ENCODE measurements at regions of chr1 and their contacts with region 1.

Region 1: DNA sequence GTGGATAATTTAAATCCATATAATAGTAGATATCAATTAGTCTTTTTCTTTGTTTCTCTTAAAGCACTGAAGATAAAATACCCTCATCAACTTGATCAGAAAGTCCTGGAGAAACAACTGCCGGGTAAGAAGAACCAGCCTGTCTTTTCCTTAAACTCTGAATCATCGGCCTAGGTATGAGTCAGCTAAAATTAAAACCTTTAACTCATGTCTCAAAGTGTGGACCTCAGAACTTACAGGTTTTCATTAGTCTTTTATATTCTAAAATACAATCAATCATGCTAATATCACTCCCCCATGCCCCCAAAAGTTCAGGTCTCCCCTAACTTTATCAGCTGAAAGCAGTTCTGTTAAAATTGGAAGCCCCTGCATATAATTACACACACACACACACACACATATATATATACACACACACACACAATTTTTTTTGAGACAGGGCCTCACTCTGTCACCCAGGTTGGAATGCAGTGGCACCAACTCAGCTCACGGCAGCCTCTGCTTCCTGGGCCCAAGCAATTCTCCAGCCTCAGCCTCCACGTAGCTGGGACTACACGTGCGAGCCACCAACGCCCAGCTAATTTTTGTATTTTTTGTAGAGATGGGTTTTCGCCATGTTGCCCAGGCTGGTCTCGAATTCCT is 61.3 kb downstream of the B3GALNT2 start:
- DNase-seq: no peak
- ATAC-seq: no peak
- H3K4me3 ChIP-seq: no peak overlapping the region
- H3K27ac ChIP-seq: peak overlapping the region; percentile 40; the same call in 1 of the 2 replicates
- H3K4me1 ChIP-seq: no peaks in the 10 kb centered on the region
- H3K27me3 ChIP-seq: no peaks in the 10 kb centered on the region
- CTCF ChIP-seq: no peak

Region 2: GRCh38 chr1:235357485-235358378 is 85.2 kb before region 1 on chr1:
- CTCF ChIA-PET with region 1: no interaction called
- POLR2A ChIA-PET with region 1: no interaction called
- in situ Hi-C with region 1: no loop called
- intact Hi-C with region 1: no loop called
- DNase-seq: no peak
- ATAC-seq: peak; percentile 33; the same call in 1 of the 2 replicates
- H3K4me3 ChIP-seq: no peak overlapping the region
- H3K27ac ChIP-seq: peak overlapping the region; percentile 36; the same call in 1 of the 2 replicates
- H3K4me1 ChIP-seq: peaks cover 4% of the 10 kb centered on the region; the same call in 1 of the 2 replicates
- H3K27me3 ChIP-seq: no peaks in the 10 kb centered on the region
- CTCF ChIP-seq: no peak

Region 3: DNA sequence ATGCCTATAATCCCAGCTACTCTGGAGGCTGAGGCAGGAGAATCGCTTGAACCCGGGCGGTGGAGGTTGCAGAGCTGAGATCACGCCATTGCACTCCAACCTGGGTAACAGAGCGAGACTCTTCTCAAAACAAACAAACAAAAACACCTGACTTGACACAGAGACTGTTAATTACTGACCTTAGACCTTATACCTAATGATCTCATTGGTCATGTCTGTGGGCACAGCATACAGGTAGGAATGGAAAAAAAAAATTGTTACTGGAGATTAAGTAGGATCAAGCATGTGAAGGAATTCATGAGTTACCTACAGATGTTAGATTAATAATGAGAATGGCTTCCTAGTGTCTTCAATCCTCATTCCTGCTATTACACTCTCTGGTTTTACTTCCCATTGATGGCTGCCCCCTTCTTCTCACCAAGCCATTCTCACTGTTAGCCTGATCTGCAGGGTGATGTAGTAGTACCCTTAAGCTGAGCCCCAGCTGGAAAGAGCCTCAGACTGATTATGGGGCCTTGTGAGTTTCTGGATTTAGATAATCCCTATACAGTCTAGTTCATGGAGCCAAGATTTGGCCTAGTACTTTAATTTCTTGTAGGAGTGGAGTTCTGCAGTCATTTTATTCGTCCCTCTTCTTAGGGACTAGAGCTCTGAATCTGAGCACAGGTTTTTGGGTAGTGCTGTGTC is 66.8 kb before region 1 on chr1:
- CTCF ChIA-PET with region 1: no interaction called
- POLR2A ChIA-PET with region 1: interaction called, 13 read pairs
- in situ Hi-C with region 1: no loop called
- intact Hi-C with region 1: no loop called
- DNase-seq: no peak
- ATAC-seq: no peak
- H3K4me3 ChIP-seq: no peak overlapping the region
- H3K27ac ChIP-seq: peak overlapping the region; percentile 49
- H3K4me1 ChIP-seq: peaks cover 2% of the 10 kb centered on the region; the same call in 1 of the 2 replicates
- H3K27me3 ChIP-seq: no peaks in the 10 kb centered on the region
- CTCF ChIP-seq: no peak

Region 4: GRCh38 chr1:235415008-235415904 is 27.7 kb before region 1 on chr1:
- CTCF ChIA-PET with region 1: no interaction called
- POLR2A ChIA-PET with region 1: no interaction called
- in situ Hi-C with region 1: no loop called
- intact Hi-C with region 1: no loop called
- DNase-seq: no peak
- ATAC-seq: peak; percentile 80
- H3K4me3 ChIP-seq: no peak overlapping the region
- H3K27ac ChIP-seq: peak overlapping the region; percentile 83
- H3K4me1 ChIP-seq: peaks cover 49% of the 10 kb centered on the region
- H3K27me3 ChIP-seq: no peaks in the 10 kb centered on the region
- CTCF ChIP-seq: peak; percentile 89

Region 5: GRCh38 chr1:235791532-235792060 is 348.7 kb after region 1 on chr1:
- CTCF ChIA-PET with region 1: no interaction called
- POLR2A ChIA-PET with region 1: no interaction called
- in situ Hi-C with region 1: no loop called
- intact Hi-C with region 1: no loop called
- DNase-seq: no peak
- ATAC-seq: no peak
- H3K4me3 ChIP-seq: no peak overlapping the region
- H3K27ac ChIP-seq: no peak overlapping the region
- H3K4me1 ChIP-seq: no peaks in the 10 kb centered on the region
- H3K27me3 ChIP-seq: no peaks in the 10 kb centered on the region
- CTCF ChIP-seq: no peak